ENCODE measurements at regions of chr19 and their contacts with region 1.

Region 1: GRCh38 chr19:15222738-15223648 is 9.3 kb downstream of the EPHX3 start:
- DNase-seq: peak; percentile 73 to 96
- H3K4me3 ChIP-seq: peak overlapping the region; percentile 64 to 82
- H3K27ac ChIP-seq: peak overlapping the region; percentile 62 to 75
- H3K4me1 ChIP-seq: peaks cover 6% of the 10 kb centered on the region in 2 donors
- H3K27me3 ChIP-seq: no peaks in the 10 kb centered on the region
- CTCF ChIP-seq: no peak

Region 2: DNA sequence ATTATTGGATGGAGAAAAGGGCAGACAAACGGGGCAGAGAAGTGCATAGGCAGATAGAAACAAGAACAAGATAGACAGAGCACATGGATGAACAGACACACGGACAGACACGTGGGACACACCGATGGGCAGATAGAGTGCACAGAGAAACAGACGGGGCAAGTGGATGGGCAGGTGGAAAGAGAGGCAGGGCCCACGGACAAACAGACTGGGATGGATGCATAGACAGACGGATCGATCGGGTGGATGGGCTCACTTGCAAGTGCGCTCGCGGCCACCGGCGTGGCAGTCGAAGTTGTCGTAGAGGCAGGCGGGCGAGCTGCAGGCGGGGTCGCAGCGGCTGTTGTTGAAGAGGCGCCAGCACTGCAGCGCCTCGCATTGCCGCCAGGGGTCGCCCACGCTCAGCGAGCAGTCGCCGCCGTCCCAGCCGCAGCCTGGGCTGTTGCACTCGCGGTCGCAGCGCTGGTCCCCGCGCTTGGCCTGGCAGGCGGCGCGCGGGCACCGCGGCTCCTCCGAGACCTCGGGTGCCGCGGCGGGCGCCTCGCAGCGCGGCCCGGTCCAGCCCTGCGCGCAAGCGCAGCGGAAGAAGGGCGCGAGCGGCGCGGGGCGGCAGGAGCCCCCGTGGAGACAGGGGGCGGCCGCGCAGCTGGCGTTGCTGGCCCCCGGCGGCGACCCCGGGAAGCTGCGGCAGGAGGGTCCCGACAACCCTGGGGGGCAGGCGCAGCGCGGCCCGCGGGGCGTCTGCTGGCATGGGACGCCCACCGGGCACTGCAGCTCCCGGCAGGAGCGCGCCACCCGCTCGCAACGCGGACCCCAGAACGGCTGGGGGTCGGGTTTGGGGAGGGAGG is 45.5 kb before region 1 on chr19:
- intact Hi-C with region 1: no loop called
- DNase-seq: peak in 1 of 2 donors; percentile 89
- H3K4me3 ChIP-seq: peak overlapping the region; percentile 28 to 51
- H3K27ac ChIP-seq: peak overlapping the region; percentile 55 to 72
- H3K4me1 ChIP-seq: no peaks in the 10 kb centered on the region
- H3K27me3 ChIP-seq: no peaks in the 10 kb centered on the region
- CTCF ChIP-seq: peak; percentile 95 to 99 (median 95)

Region 3: GRCh38 chr19:15245370-15246197 is 22.6 kb after region 1 on chr19:
- intact Hi-C with region 1: loop called (anchors 1 kb)
- DNase-seq: no peak
- H3K4me3 ChIP-seq: no peak overlapping the region
- H3K27ac ChIP-seq: peak overlapping the region; percentile 96 to 99
- H3K4me1 ChIP-seq: peaks cover 37 to 68% of the 10 kb centered on the region in 2 donors
- H3K27me3 ChIP-seq: no peaks in the 10 kb centered on the region
- CTCF ChIP-seq: no peak

Measured in ascending aorta (tissue), 2 donors.